Activated CD8-positive, alpha-beta memory T cell treated with anti-CD3 and anti-CD28 coated beads, Interleukin-2, amount 10 ng/mL, durations not matched to agents 7 days and 5 days (primary cell): ENCODE measurements at regions of chr21 and their contacts with region 1.

Region 1: GRCh38 chr21:44792702-44793591 is 8.7 kb downstream of the UBE2G2 start:
- DNase-seq: peak; percentile 64
- ATAC-seq: peak; percentile 93
- H3K4me3 Mint-ChIP-seq: no peak overlapping the region
- H3K27ac Mint-ChIP-seq: peak overlapping the region; percentile 32
- H3K4me1 Mint-ChIP-seq: peaks cover 37% of the 10 kb centered on the region
- H3K27me3 Mint-ChIP-seq: no peaks in the 10 kb centered on the region

Region 2: DNA sequence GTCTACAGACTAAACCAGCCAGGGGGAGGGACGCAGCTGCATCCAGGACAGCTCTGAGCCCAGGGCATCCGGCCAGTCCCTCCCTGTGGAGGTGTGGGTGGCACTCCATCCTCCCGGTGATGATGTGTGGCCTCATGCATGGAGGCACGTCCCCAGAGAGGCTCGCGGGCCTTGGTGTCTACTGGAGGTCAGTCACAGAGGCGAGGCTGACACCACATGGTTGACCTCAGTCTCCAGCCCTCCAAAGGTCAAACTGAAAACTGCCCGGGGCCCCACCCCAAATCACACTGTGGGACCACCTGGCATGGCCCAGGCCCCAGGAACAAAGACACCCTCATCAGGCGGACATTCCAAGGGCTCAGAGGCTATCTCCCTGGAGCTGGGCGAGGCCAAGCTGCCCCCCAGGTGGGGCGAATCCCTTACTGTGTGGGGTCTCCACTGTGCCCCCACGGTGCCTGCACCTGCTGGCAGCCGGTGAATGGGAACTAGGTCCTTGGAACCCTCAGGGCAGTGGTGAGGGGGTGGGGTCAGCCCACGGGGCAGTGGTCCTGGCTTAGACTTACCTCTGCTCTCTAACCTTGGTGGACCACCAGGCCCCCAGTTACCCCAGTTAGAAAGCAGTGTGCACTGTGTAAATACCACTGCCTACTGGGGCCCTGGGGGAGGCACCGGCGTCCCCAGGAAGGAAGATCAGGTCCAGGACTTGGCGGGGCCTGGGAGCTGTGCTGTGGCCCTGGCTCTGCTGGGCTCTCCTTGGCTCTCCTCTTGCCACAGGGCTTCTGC is 390.4 kb before region 1 on chr21:
- CTCF ChIA-PET with region 1: no interaction called
- DNase-seq: peak; percentile 36
- ATAC-seq: no peak
- H3K4me3 Mint-ChIP-seq: no peak overlapping the region
- H3K27ac Mint-ChIP-seq: no peak overlapping the region
- H3K4me1 Mint-ChIP-seq: peaks cover 2% of the 10 kb centered on the region
- H3K27me3 Mint-ChIP-seq: no peaks in the 10 kb centered on the region

Region 3: GRCh38 chr21:44503901-44504399 is 289.0 kb before region 1 on chr21:
- CTCF ChIA-PET with region 1: interaction called, 99 read pairs
- DNase-seq: no peak
- ATAC-seq: no peak
- H3K4me3 Mint-ChIP-seq: no peak overlapping the region
- H3K27ac Mint-ChIP-seq: no peak overlapping the region
- H3K4me1 Mint-ChIP-seq: peaks cover 14% of the 10 kb centered on the region
- H3K27me3 Mint-ChIP-seq: no peaks in the 10 kb centered on the region

Region 4: DNA sequence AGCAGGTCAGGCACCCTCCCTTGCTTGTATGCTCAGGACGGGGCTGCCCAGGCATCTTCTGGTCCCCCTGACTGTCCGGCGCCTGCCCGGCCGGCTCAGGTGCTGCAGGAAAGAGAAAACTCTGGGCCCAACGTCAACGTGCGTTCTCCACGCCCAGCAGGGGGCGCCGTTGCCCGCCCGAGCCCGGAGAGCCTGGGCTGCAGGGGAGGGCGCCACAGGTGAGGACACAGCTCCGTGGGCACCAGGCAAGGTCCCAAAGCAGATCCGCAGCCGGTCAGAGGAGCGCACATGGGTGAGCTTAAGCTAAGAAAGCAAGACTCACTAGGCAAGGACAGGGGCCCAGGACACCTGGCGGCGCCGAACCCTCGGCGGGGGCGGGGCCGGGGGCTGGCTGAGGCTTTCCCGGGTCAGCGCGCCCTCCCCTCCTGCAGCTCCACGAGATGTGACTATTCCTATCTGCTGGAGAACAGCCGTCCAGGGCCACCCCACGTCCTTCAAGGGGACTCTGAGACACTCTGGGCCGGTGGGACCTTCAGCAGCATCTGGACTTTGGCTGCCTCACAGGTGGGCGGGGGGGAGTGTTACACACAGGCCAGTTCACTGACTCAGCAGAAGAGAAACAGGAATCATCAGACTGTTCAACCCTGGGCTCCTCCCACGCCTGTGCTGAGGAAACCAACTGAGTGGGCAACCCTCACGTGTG is 282.3 kb before region 1 on chr21:
- CTCF ChIA-PET with region 1: interaction called, 99 read pairs
- DNase-seq: peak; percentile 80
- ATAC-seq: peak; percentile 89
- H3K4me3 Mint-ChIP-seq: no peak overlapping the region
- H3K27ac Mint-ChIP-seq: no peak overlapping the region
- H3K4me1 Mint-ChIP-seq: peaks cover 9% of the 10 kb centered on the region
- H3K27me3 Mint-ChIP-seq: no peaks in the 10 kb centered on the region

Region 5: DNA sequence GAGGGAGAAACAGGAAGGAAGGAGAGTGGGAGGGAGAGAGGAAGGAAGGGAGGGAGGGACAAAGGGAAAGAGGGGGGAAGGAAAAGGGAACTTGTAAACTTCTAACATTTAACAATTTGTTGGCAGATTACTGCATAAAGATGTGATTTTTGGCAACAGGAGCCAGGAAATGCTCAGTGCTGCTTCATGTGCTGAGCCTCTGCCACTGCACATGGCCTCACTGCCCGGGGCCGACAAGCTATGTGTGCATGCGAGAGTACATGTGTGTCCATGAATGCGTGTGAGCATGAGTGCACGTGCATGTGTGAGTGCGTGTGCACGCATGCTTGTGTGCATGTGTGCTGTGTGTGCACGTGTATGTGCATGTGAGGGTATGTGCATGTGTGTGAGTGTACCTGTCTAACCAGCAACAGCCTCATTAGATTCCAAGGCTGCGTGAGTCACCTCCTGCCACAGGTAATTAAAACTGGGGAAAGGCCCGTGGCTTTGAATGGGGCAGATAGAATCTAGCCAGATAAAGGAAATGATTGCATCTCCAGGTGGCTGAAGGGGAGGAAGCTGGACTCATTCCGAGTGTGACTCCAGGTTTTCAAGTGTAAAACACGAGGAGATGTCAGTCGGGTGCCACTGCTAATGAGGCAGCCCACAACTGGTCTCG is 40.2 kb before region 1 on chr21:
- CTCF ChIA-PET with region 1: no interaction called
- DNase-seq: no peak
- ATAC-seq: no peak
- H3K4me3 Mint-ChIP-seq: no peak overlapping the region
- H3K27ac Mint-ChIP-seq: no peak overlapping the region
- H3K4me1 Mint-ChIP-seq: no peaks in the 10 kb centered on the region
- H3K27me3 Mint-ChIP-seq: peaks cover 10% of the 10 kb centered on the region

Region 6: GRCh38 chr21:44779417-44780136 is 13.4 kb before region 1 on chr21:
- CTCF ChIA-PET with region 1: interaction called, 18 read pairs
- DNase-seq: no peak
- ATAC-seq: no peak
- H3K4me3 Mint-ChIP-seq: no peak overlapping the region
- H3K27ac Mint-ChIP-seq: no peak overlapping the region
- H3K4me1 Mint-ChIP-seq: no peaks in the 10 kb centered on the region
- H3K27me3 Mint-ChIP-seq: no peaks in the 10 kb centered on the region